ENCODE measurements at regions of chr6 and their contacts with region 1.

Region 1: GRCh38 chr6:143026696-143027449 is 33.8 kb upstream of the AIG1 start:
- DNase-seq: peak; percentile 28 to 47 (median 36)
- H3K4me3 ChIP-seq: no peak overlapping the region
- H3K4me3 Mint-ChIP-seq: no peak overlapping the region
- H3K27ac ChIP-seq: no peak overlapping the region
- H3K27ac Mint-ChIP-seq: peak overlapping the region in 2 of 7 donors; percentile 13 to 68
- H3K4me1 ChIP-seq: no peaks in the 10 kb centered on the region
- H3K4me1 Mint-ChIP-seq: peaks cover 0 to 7% (median under 1%) of the 10 kb centered on the region in 4 donors
- H3K27me3 ChIP-seq: no peaks in the 10 kb centered on the region
- H3K27me3 Mint-ChIP-seq: no peaks in the 10 kb centered on the region

Region 2: DNA sequence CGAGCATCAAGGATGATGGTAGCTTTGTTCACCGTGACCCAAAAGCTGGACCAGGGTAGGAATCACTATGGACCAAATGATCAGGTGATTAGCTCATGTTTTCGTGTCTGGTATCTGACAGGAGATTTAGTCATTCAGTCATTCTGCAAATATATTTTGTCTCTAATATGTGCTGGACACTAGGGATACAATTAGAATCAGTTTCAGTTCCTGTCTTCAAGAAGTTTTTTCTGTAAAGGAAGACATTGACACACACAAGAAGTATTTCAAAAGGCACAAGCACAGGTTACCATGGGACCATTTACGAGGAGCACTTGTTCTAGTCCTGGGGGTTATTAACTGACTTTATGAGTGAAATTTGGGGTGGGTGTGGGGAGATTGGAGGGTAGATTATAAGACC is 326.8 kb before region 1 on chr6:
- CTCF ChIA-PET with region 1: interaction called, 11 read pairs
- POLR2A ChIA-PET with region 1: interaction called, 4 read pairs
- intact Hi-C with region 1: no loop called
- DNase-seq: no peak
- H3K4me3 ChIP-seq: no peak overlapping the region
- H3K4me3 Mint-ChIP-seq: no peak overlapping the region
- H3K27ac ChIP-seq: no peak overlapping the region
- H3K27ac Mint-ChIP-seq: no peak overlapping the region
- H3K4me1 ChIP-seq: no peaks in the 10 kb centered on the region
- H3K4me1 Mint-ChIP-seq: peaks cover 0 to 5% (median 1%) of the 10 kb centered on the region in 4 donors
- H3K27me3 ChIP-seq: no peaks in the 10 kb centered on the region
- H3K27me3 Mint-ChIP-seq: no peaks in the 10 kb centered on the region

Region 3: DNA sequence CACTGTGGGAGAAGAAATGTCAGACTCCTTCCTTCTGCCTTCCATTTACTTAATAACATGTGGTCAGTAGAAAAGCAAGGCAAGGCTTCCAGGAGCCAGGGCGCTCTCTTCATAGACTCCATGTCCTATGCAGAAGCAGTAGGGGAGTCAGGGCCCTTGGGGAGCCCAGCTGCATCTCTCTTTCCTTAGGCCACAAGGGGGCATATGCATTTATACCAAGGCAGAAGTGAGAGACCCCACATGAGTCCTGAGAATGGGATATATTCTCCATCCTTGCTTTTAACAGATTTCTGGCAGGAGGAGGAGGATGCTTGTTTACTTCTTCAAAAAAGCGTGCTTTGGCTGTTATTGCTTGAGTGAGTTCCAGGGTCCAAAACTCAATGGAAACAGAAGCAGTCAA is 280.3 kb before region 1 on chr6:
- CTCF ChIA-PET with region 1: interaction called, 21 read pairs
- POLR2A ChIA-PET with region 1: interaction called, 4 read pairs
- intact Hi-C with region 1: loop called (anchors 1 kb)
- DNase-seq: peak in 4 of 5 donors; percentile 29 to 42 (median 34)
- H3K4me3 ChIP-seq: no peak overlapping the region
- H3K4me3 Mint-ChIP-seq: no peak overlapping the region
- H3K27ac ChIP-seq: no peak overlapping the region
- H3K27ac Mint-ChIP-seq: peak overlapping the region in 1 of 7 donors; percentile 16
- H3K4me1 ChIP-seq: peaks cover 5% of the 10 kb centered on the region
- H3K4me1 Mint-ChIP-seq: peaks cover 3 to 11% (median 9%) of the 10 kb centered on the region in 4 donors
- H3K27me3 ChIP-seq: no peaks in the 10 kb centered on the region
- H3K27me3 Mint-ChIP-seq: no peaks in the 10 kb centered on the region

Region 4: GRCh38 chr6:142913511-142914047 is 113.3 kb before region 1 on chr6:
- CTCF ChIA-PET with region 1: interaction called, 3 read pairs
- POLR2A ChIA-PET with region 1: interaction called, 3 read pairs
- intact Hi-C with region 1: loop called (anchors 10 kb)
- DNase-seq: peak; percentile 78 to 88 (median 81)
- H3K4me3 ChIP-seq: peak overlapping the region; percentile 14 to 57
- H3K4me3 Mint-ChIP-seq: peak overlapping the region; percentile 84 to 95 (median 88)
- H3K27ac ChIP-seq: peak overlapping the region; percentile 85
- H3K27ac Mint-ChIP-seq: peak overlapping the region in 6 of 7 donors; percentile 98 to 100 (median 99)
- H3K4me1 ChIP-seq: peaks cover 97% of the 10 kb centered on the region
- H3K4me1 Mint-ChIP-seq: peaks cover 71 to 86% (median 80%) of the 10 kb centered on the region in 4 donors
- H3K27me3 ChIP-seq: no peaks in the 10 kb centered on the region
- H3K27me3 Mint-ChIP-seq: no peaks in the 10 kb centered on the region

Region 5: GRCh38 chr6:143098054-143098671 is 71.3 kb after region 1 on chr6:
- CTCF ChIA-PET with region 1: no interaction called
- POLR2A ChIA-PET with region 1: no interaction called
- intact Hi-C with region 1: no loop called
- DNase-seq: peak; percentile 16 to 46 (median 33)
- H3K4me3 ChIP-seq: peak overlapping the region; percentile 8 to 19
- H3K4me3 Mint-ChIP-seq: no peak overlapping the region
- H3K27ac ChIP-seq: peak overlapping the region; percentile 19
- H3K27ac Mint-ChIP-seq: no peak overlapping the region
- H3K4me1 ChIP-seq: peaks cover 26% of the 10 kb centered on the region
- H3K4me1 Mint-ChIP-seq: peaks cover 0 to 4% (median 4%) of the 10 kb centered on the region in 4 donors
- H3K27me3 ChIP-seq: no peaks in the 10 kb centered on the region
- H3K27me3 Mint-ChIP-seq: no peaks in the 10 kb centered on the region

Region 6: DNA sequence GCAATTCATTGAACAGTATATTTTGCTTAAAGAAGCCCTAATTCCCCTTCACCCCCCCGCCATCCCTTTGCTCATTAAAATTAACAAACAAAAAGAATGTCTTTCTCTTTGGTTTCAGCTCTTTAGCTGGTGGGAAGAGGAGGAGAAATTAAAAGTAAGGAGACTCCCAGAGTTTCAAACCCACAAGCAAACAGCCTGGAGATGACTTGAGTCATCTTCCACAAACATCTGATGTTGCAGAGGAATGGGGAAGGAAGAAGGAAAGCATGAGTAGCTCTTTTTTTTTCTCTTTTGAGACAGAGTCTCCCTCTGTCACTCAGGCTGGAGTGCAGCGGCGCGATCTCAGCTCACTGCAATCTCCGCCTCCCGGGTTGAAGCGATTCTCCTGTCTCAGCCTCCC is 234.0 kb after region 1 on chr6:
- CTCF ChIA-PET with region 1: no interaction called
- POLR2A ChIA-PET with region 1: no interaction called
- intact Hi-C with region 1: no loop called
- DNase-seq: no peak
- H3K4me3 ChIP-seq: no peak overlapping the region
- H3K4me3 Mint-ChIP-seq: no peak overlapping the region
- H3K27ac ChIP-seq: no peak overlapping the region
- H3K27ac Mint-ChIP-seq: no peak overlapping the region
- H3K4me1 ChIP-seq: no peaks in the 10 kb centered on the region
- H3K4me1 Mint-ChIP-seq: no peaks in the 10 kb centered on the region
- H3K27me3 ChIP-seq: no peaks in the 10 kb centered on the region
- H3K27me3 Mint-ChIP-seq: peaks cover 0 to 2% of the 10 kb centered on the region in 2 donors

Region 7: DNA sequence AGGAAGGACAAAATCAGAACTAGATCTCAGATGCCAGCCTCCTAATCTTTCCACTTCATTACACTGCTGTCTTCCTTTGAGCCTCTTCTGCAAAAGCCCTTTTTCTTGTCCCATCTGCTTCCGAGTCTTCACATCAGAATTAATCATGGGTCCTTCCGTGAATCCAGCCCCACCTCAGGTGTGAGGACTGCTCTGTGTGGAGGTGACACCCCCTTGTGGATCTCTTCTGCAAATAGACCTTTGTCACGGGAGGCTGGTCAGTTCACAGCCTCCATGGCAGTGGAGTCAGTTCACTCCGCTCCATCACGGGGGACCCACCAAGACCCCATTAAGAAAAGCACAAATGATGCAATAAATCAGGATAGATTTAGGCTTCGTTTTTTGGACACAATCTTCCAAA is 252.5 kb after region 1 on chr6:
- CTCF ChIA-PET with region 1: no interaction called
- POLR2A ChIA-PET with region 1: no interaction called
- intact Hi-C with region 1: no loop called
- DNase-seq: peak in 1 of 5 donors; percentile 1
- H3K4me3 ChIP-seq: no peak overlapping the region
- H3K4me3 Mint-ChIP-seq: no peak overlapping the region
- H3K27ac ChIP-seq: no peak overlapping the region
- H3K27ac Mint-ChIP-seq: no peak overlapping the region
- H3K4me1 ChIP-seq: no peaks in the 10 kb centered on the region
- H3K4me1 Mint-ChIP-seq: peaks cover 0 to 3% (median 0%) of the 10 kb centered on the region in 4 donors
- H3K27me3 ChIP-seq: no peaks in the 10 kb centered on the region
- H3K27me3 Mint-ChIP-seq: no peaks in the 10 kb centered on the region

Region 8: GRCh38 chr6:143427109-143427817 is 400.4 kb after region 1 on chr6:
- CTCF ChIA-PET with region 1: interaction called, 8 read pairs
- POLR2A ChIA-PET with region 1: no interaction called
- intact Hi-C with region 1: loop called (anchors 5 kb)
- DNase-seq: peak; percentile 65 to 73 (median 70)
- H3K4me3 ChIP-seq: no peak overlapping the region
- H3K4me3 Mint-ChIP-seq: no peak overlapping the region
- H3K27ac ChIP-seq: no peak overlapping the region
- H3K27ac Mint-ChIP-seq: peak overlapping the region in 2 of 7 donors; percentile 15 to 81
- H3K4me1 ChIP-seq: no peaks in the 10 kb centered on the region
- H3K4me1 Mint-ChIP-seq: no peaks in the 10 kb centered on the region
- H3K27me3 ChIP-seq: no peaks in the 10 kb centered on the region
- H3K27me3 Mint-ChIP-seq: no peaks in the 10 kb centered on the region

Region 9: GRCh38 chr6:144602523-144603180 is 1575.8 kb after region 1 on chr6:
- CTCF ChIA-PET with region 1: no interaction called
- POLR2A ChIA-PET with region 1: no interaction called
- intact Hi-C with region 1: no loop called
- DNase-seq: peak in 4 of 5 donors; percentile 16 to 37 (median 26)
- H3K4me3 ChIP-seq: no peak overlapping the region
- H3K4me3 Mint-ChIP-seq: peak overlapping the region in 4 of 8 donors; percentile 41 to 59 (median 54)
- H3K27ac ChIP-seq: no peak overlapping the region
- H3K27ac Mint-ChIP-seq: peak overlapping the region in 1 of 7 donors; percentile 26
- H3K4me1 ChIP-seq: peaks cover 30% of the 10 kb centered on the region
- H3K4me1 Mint-ChIP-seq: peaks cover 34 to 64% (median 52%) of the 10 kb centered on the region in 4 donors
- H3K27me3 ChIP-seq: no peaks in the 10 kb centered on the region
- H3K27me3 Mint-ChIP-seq: no peaks in the 10 kb centered on the region

Measured in CD4-positive, alpha-beta memory T cell (primary cell).